Esophagus muscularis mucosa (tissue), 4 donors: ENCODE measurements at regions of chr10 and their contacts with region 1.

Region 1: DNA sequence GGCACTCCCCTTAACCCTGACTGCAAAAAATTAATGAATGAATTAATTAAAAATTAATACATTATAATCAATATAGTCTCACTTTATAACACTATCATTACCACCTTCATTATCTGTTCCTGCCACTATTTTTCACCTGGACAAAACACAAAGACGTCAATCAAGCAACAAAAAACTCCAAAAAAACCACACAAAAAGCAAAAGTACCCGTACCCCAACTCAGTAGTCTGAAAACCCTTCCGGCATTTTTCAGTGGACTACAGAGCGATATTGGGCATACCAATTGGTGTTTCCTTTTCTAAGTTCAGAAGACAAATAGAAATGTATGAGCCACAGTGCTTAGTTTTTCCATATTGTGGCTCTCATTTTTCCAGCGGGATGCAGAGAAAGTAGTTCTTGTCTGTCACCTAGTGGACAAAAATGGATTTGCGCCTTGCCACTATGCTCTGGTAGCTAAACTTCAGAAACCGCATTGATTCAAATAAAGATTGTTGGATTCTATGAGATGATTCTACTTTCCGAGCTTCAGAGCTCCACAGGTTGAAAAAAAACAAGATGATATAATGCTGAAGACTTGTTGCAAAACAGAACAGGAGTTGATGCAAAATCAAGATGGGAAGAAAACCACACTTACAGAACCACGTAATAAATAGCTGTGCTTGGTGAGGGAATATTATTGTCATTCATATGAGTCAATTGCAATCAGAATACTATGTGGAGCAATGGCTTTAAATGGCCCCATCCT is 50.6 kb upstream of the ITGB1 start:
- DNase-seq: no peak
- H3K4me3 ChIP-seq: no peak overlapping the region
- H3K27ac ChIP-seq: peak overlapping the region in 3 of 4 donors; percentile 22 to 46 (median 46)
- H3K4me1 ChIP-seq: peaks cover 13 to 31% (median 26%) of the 10 kb centered on the region in 4 donors
- H3K27me3 ChIP-seq: no peaks in the 10 kb centered on the region
- CTCF ChIP-seq: peak in 2 of 3 experiments; percentile 99 to 100
- EP300 ChIP-seq: no peak
- POLR2A ChIP-seq: no peak

Region 2: DNA sequence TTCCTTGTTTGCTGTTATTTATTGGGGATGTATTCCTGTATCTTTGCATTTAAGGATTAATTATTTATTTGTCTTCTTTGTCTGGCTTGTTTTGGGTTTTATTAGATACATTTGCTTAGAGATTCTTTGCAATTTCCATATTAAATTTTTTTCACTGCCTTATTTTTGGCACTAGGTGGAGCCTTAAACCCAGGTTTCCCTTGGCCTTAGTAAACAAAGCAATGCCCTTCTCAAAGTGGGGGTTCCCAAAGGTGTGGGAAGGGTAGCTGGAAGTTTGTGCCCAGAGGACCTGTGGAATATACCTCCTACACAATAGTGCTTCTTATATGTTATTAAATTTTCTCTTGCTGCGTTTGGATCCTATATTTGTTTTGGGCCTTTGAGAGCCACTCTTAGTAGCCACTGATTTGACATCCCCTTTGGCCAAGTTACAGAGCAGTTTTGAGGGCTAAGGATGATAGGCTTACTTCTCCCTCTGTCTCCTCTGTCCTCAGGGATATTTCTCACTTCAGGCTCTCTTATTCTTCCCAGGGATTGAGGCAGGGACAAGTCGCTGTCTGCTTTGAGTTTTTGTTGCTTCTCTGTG is 213.0 kb before region 1 on chr10:
- intact Hi-C with region 1: loop called (anchors 1 kb)
- DNase-seq: no peak
- H3K4me3 ChIP-seq: no peak overlapping the region
- H3K27ac ChIP-seq: no peak overlapping the region
- H3K4me1 ChIP-seq: no peaks in the 10 kb centered on the region
- H3K27me3 ChIP-seq: no peaks in the 10 kb centered on the region
- CTCF ChIP-seq: peak; percentile 66 to 80 (median 70)
- EP300 ChIP-seq: no peak
- POLR2A ChIP-seq: no peak

Region 3: GRCh38 chr10:32906595-32906994 is 102.1 kb before region 1 on chr10:
- intact Hi-C with region 1: loop called (anchors 10 kb)
- DNase-seq: no peak
- H3K4me3 ChIP-seq: no peak overlapping the region
- H3K27ac ChIP-seq: no peak overlapping the region
- H3K4me1 ChIP-seq: peaks cover 0 to 3% (median 0%) of the 10 kb centered on the region in 4 donors
- H3K27me3 ChIP-seq: no peaks in the 10 kb centered on the region
- CTCF ChIP-seq: no peak
- EP300 ChIP-seq: no peak
- POLR2A ChIP-seq: no peak

Region 4: DNA sequence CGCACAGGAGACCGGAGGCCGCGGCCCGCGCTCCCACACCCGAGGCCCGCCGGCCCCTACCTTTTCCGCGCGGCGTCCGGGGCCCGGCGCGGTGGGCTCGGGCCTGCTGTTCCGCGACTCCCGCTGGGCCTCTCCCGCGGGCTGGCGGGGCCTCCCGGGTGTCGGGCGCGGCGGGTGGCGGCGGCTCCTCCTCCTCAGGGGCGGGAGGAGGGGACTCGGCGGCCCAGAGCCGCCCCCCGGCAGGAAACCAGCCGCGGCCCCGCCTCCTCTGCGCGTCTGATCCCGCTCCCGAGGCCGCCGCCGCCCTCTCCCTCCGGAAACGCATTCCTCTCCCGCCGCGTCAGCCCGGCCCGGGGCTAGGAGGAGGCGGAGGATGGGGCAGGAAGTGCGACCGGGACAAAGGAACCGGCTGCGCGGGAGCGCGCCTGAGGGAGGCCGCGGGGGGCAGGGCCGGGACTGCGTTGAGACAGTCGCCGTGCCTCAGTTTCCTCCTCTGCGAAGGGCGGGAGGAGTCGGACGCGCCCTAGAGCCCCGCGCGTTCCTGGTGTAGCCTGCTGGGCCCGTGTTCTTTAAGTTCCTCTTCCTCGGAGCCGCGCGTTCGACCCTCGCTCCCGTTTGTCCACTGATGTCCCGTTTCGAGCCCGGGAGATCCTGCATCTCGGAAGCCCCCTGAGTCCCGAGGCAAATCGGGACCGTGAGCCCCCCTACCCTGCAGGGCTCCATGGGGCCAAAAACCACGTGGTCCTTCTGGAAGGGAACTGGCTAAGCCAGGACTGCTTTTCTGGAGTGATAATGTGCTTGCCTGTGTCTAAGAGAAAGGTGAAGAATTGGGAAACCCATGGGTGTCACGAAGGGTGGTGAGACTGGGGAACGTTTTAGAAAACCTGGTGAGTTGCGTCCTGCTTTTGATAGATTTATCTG is 50.3 kb before region 1 on chr10 and contains the start of gene ITGB1:
- intact Hi-C with region 1: loop called (anchors 2 kb)
- DNase-seq: peak; percentile 98
- H3K4me3 ChIP-seq: peak within 1 kb of the TSS; percentile 96 to 100 (median 99)
- H3K27ac ChIP-seq: peak within 1 kb of the TSS; percentile 96 to 100 (median 98)
- H3K4me1 ChIP-seq: peaks cover 46 to 71% (median 61%) of the 10 kb centered on the region in 4 donors
- H3K27me3 ChIP-seq: no peaks in the 10 kb centered on the region
- CTCF ChIP-seq: no peak
- EP300 ChIP-seq: peak; percentile 28
- POLR2A ChIP-seq: peak; percentile 92
- total RNA-seq, gene ITGB1: 1,385 to 1,873 (median 1,661) TPM

Region 5: GRCh38 chr10:33134011-33134751 is 125.5 kb after region 1 on chr10:
- intact Hi-C with region 1: no loop called
- DNase-seq: no peak
- H3K4me3 ChIP-seq: no peak overlapping the region
- H3K27ac ChIP-seq: peak overlapping the region; percentile 45 to 61 (median 56)
- H3K4me1 ChIP-seq: peaks cover 0 to 53% (median 28%) of the 10 kb centered on the region in 4 donors
- H3K27me3 ChIP-seq: no peaks in the 10 kb centered on the region
- CTCF ChIP-seq: no peak
- EP300 ChIP-seq: no peak
- POLR2A ChIP-seq: no peak